ENCODE measurements at regions of chr17 and their contacts with region 1.

Region 1: DNA sequence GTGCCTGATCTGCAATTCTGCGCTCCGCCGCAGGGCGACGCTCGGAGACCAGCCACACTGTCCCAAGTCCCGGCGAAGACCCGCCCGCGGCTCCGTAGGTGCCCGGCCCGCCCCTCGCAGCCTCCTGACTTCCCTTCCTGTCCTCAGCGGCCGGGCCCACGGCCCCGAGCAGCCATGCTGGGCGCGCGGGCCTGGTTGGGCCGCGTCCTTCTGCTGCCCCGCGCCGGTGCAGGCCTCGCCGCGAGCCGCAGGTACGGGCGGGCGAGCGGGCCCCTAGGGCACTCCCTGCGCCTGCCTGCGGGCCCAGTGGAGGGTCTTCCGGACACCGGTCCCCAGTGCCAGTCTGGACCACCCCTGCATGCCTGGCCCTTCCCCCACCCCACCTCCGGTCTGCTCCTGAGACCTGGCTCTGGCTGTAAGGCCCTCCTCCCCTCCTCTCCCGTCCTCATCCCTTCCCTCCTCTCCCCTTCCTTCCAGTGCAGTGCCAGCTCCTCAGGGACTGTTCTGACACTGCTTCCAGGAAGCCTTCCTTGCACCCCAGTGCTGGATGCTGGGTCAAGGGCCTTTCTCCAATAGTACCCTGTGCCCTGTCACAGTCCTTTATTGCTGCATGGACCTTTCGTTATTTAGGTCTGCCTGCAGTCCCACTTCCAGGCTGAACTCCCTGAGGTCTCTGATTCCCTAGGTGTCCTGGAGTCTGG is at the start of gene SPATA20:
- DNase-seq: peak; percentile 33
- H3K4me3 ChIP-seq: peak within 1 kb of the TSS; percentile 72
- CTCF ChIP-seq: peak; percentile 94

Region 2: DNA sequence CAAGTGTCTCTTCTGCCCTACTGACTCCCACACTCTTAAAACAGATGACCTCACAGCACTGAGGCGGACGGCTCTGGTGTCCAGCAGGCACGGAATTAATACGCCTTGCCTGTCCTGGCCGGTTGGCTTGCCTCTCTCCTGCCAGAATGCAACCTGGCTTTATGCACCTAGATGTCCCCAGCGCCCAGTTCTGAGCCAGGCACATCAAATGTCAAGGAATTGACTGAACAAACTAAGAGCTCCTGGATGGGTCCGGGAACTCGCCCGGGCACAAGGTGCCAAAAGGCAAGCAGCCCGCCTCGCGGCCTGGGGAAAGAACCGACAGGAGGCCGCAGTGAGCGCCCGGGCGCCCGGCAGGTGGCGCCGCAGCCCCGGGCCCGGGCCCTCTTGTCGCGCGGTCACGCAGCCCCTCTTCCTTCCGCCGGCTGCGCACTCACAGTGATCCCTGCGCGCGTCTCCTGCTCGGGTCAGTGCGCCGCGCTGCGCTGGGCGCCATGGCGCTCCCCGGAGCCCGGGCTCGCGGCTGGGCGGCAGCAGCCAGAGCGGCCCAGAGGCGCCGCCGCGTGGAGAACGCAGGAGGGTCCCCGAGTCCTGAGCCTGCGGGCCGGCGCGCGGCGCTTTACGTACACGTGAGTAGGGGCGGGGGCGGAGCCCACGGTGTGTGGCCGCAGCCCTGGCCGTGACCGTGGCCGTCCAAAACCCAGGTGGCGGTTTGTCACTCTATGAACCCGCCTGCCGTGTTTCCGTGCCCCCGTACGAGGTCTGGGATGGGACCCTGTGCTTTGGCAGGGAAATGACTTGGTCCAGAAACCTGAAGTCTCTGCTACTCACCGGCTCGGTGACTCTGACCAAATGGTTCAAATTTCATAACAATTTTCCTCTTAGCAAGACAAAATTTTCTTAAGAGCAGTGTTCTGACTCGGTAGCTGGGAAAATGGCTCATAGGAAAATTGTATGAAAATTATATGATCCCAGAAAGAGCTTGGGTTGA is 68.5 kb before region 1 on chr17 and contains the start of gene RSAD1:
- CTCF ChIA-PET with region 1: interaction called, 23 read pairs
- POLR2A ChIA-PET with region 1: no interaction called
- DNase-seq: peak; percentile 26
- H3K4me3 ChIP-seq: peak within 1 kb of the TSS; percentile 81
- CTCF ChIP-seq: peak; percentile 64

Region 3: DNA sequence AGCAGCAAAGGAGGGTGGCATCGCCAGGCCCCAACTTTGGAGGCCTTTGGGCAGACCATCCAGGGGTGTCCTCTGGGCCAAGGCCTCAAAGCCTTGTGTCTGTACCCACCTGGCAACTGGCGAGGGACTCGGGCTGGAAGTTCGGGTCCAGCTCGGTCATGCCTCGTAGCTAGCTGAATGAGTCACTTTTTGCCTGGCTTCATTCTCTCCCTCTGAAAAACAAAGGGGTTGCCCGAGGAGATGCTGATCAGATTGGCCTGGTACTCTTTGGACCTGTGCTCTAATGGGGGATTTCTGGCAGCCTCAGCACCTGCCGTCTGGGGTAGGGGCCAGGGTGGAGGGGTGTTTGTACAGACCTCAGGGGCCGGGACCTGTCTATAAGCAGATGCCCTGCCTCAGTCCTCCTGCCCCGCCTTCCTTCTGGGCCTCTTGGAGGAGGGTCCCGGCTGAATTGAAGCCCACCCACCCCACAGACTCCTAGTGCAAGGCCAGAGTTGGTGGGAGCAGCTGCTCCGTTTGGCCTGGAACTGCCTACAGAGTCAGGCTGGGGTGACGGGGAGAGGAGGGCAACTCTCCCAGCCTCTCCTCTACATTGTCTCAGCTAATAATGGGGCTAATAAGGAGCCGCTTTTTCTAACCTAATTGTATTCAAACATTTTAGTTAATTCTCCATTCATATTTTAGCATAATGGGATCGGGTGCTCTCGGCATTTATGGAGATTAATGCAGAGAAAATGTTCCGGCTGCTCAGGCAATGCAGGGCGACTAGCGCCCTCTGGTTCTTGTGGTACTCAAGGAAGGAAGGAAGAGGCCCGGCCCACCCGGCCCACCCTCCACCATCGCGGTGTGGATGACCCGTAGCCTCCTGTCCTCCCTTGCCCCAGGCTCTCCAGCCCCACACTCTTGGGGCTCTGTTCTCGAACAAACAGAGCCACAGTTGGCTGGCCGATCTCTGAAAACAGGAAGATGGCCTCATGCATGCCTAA is 66.1 kb after region 1 on chr17:
- CTCF ChIA-PET with region 1: interaction called, 15 read pairs
- POLR2A ChIA-PET with region 1: no interaction called
- DNase-seq: no peak
- H3K4me3 ChIP-seq: no peak overlapping the region
- CTCF ChIP-seq: no peak

Region 4: DNA sequence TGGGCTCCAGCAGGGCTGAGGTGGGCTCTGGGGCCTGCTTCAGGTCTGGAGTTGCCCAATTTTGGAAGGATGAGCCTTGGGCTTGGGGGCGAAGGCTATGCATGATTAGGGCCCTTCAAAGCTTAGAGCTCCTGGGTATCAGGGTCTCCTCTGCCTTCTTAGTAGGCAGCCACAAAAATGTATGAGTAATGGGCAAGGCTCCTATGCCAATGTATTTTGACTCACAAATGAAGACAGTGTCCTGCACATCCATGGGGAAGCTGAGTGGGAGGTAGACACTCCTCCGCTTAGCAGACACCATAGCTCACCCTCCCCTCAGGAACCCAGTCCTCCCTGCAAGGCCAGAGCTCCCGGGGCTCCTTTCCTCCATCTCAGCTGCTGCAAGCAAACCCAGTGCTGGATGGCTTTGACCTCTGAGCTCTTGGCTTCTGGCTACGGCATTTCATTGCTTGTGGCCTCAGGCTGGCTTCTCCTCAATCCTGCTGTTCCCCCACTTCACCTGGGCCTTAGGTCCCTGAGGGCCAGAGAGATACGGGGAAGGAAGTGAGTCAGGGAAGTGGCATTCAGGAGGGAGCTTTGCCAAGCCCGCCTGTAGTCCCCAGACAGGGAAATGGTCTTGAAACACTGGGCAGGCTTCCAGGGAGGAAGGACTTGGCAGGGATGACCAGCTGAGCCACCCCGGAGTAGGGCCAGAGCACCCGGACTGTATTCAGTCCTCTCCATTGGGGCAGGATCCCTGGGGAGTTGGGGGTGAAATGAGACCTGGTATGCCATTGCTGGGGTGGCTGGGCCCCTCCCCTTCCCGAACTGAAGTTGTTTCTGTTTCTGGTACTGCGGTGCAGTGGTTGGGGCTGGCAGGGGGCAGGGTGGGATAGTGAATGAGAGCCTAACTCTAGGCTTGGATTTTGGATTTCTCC is 91.9 kb after region 1 on chr17:
- CTCF ChIA-PET with region 1: interaction called, 16 read pairs
- POLR2A ChIA-PET with region 1: interaction called, 6 read pairs
- DNase-seq: peak; percentile 87
- H3K4me3 ChIP-seq: no peak overlapping the region
- CTCF ChIP-seq: no peak

Region 5: GRCh38 chr17:50681263-50682210 is 134.4 kb after region 1 on chr17:
- CTCF ChIA-PET with region 1: interaction called, 150 read pairs
- POLR2A ChIA-PET with region 1: no interaction called
- DNase-seq: no peak
- H3K4me3 ChIP-seq: no peak overlapping the region
- CTCF ChIP-seq: peak; percentile 80

Region 6: DNA sequence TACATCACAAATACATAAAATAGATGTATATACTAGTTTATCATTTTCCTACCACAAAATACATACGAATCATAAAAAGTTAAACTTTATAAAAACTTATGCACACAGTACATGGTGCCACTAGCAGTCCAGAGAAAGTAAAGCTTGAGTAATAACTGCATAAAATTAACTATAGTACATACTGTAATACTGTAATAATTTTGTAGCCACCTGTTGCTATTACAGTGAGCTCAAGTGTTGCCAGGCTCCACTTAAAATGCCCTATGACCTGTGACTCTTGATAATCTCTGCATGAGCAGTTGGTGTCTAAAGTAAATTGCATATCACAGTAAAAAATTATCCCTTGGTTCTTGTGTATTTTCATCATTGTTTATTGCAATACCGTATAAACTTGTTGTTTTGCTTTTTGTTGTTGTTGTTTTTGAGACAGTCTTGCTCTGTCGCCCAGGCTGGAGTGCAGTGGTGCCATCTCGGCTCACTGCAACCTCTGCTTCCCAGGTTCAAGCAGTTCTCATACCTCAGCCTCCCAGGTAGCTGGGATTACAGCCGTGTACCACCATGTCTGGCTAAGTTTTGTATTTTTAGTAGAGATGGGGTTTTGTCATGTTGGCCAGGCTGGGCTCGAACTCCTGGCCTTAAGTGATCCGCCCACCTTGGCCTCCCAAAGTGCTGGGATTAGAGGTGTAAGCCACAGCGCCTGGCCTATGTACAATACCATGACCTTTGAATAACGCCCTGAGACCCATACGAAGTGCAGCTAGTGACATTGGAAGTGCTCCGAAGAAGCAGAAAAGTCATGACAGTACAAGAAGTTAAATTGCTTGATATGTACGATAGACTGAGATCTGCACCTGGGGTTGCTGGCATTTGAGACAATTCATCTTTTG is 178.8 kb after region 1 on chr17:
- CTCF ChIA-PET with region 1: interaction called, 13 read pairs
- POLR2A ChIA-PET with region 1: no interaction called
- DNase-seq: no peak
- H3K4me3 ChIP-seq: no peak overlapping the region
- CTCF ChIP-seq: no peak